ENCODE measurements at regions of chr16 and their contacts with region 1.

Region 1: DNA sequence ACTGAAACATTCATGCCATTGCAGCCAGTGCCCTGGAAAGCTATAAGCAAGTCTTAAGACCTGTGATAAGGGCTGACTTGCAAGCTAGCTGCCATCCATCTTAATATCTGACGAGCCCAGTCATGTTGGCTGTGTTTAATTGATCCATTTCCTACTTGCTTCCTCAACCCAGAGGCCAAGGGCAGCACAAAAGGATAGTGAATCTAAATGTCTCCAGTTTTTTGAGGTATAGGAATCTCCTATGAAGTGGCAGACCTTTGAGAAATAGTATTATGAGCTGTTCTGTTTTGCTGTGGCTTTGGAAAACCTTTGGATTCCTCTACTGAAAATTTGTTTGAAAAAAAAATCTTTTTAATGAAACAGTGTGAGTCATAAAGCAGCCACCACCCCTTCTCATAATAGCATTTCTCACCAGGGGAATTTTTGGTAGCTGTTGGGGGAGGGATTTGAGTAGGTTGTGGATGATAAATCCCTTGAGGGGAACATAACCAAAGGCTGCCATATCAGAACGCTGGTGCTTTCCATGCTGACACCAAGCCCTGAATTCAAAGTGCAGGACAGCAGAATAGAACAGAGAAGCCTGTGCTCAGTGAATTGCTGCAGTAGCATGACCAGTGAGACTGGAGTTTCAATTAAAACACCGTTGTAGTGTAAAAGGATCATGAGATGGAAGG is 12.9 kb downstream of the ZNRF1 start:
- DNase-seq: peak; percentile 89
- H3K4me3 ChIP-seq: peak overlapping the region in 1 of 3 experiments; percentile 34
- H3K27ac ChIP-seq: peak overlapping the region; percentile 92
- H3K4me1 ChIP-seq: peaks cover 32% of the 10 kb centered on the region
- H3K27me3 ChIP-seq: no peaks in the 10 kb centered on the region
- CTCF ChIP-seq: no peak
- POLR2A ChIP-seq: no peak

Region 2: GRCh38 chr16:74984535-74985296 is 27.1 kb before region 1 on chr16 and contains the start of gene WDR59:
- CTCF ChIA-PET with region 1: no interaction called
- POLR2A ChIA-PET with region 1: interaction called, 3 read pairs
- dilution Hi-C with region 1: no loop called
- intact Hi-C with region 1: loop called (anchors 1 kb)
- DNase-seq: peak; percentile 99
- H3K4me3 ChIP-seq: peak within 1 kb of the TSS; percentile 41 to 89 (median 73)
- H3K27ac ChIP-seq: peak within 1 kb of the TSS; percentile 42
- H3K4me1 ChIP-seq: no peaks in the 10 kb centered on the region
- H3K27me3 ChIP-seq: no peaks in the 10 kb centered on the region
- CTCF ChIP-seq: no peak
- POLR2A ChIP-seq: peak; percentile 84
- total RNA-seq, gene WDR59: 60.0 and 62.2 TPM in 2 replicates

Region 3: GRCh38 chr16:75025761-75026160 is 14.0 kb after region 1 on chr16:
- CTCF ChIA-PET with region 1: interaction called, 7 read pairs
- POLR2A ChIA-PET with region 1: no interaction called
- dilution Hi-C with region 1: no loop called
- intact Hi-C with region 1: loop called (anchors 2 kb)
- DNase-seq: no peak
- H3K4me3 ChIP-seq: no peak overlapping the region
- H3K27ac ChIP-seq: peak overlapping the region; percentile 68
- H3K4me1 ChIP-seq: peaks cover 33% of the 10 kb centered on the region
- H3K27me3 ChIP-seq: no peaks in the 10 kb centered on the region
- CTCF ChIP-seq: no peak
- POLR2A ChIP-seq: no peak

Region 4: DNA sequence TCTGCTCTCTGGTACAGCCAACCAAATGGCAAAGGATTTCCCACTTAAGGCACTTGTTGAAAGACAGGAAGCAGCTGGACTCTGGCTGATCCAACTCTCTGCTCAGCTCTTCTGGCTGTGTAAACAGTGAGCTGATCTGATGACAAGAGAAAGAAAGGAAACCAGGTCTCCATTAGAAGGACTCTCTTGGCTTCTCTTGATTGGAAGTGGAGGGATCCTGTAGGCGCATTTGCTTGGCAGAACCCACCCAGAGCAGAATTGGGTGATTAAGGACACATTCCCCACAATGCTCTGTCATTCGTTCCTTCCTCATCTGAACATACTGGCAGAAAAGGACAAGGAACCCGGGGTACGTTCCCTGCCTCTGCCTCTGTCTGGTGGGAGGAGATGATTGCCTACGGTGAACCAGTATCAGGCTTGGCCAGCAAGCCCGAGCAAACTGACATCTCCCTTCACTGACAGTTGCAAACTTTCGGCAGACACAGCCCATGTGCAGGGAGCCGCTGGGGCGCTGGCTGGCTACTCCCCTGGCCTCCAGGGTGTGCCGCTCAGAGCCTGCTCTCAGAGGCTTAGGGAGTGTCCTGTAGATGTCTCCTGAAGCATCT is 75.7 kb after region 1 on chr16:
- CTCF ChIA-PET with region 1: no interaction called
- POLR2A ChIA-PET with region 1: no interaction called
- dilution Hi-C with region 1: no loop called
- intact Hi-C with region 1: loop called (anchors 1 kb)
- DNase-seq: peak; percentile 96
- H3K4me3 ChIP-seq: no peak overlapping the region
- H3K27ac ChIP-seq: peak overlapping the region; percentile 45
- H3K4me1 ChIP-seq: peaks cover 26% of the 10 kb centered on the region
- H3K27me3 ChIP-seq: no peaks in the 10 kb centered on the region
- CTCF ChIP-seq: no peak
- POLR2A ChIP-seq: peak; percentile 71

Region 5: DNA sequence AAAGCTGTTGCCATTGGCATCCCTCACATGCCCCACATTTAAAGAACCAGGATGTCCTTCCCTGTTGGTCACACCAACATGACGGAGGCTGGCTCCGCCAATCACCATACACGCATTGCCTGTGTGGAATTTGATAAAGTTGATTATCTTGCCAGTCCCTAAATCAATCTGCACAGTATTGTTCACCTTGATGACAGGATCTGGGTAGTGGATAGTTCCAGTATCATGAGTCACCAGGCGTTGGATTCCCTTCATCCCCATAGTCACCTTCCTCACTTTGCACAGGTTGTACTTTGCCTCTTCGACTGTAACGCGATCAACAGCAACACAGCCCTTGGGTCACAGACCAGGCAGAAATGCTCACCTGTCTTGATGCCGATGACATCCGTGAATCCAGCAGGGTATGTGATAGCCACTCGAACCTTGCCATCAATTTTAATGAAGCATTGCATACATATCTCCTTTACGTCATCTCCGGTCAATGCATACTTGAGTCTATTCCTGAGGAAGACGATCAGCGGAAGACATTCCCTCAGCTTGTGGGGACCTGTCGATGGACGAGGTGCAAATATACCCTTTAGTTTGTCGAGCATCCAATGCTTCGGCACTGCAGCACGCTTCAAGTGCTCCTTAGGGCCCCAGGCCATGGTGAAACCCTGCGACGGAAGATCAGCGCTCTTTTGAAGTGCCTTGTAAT is 181.0 kb after region 1 on chr16:
- CTCF ChIA-PET with region 1: no interaction called
- POLR2A ChIA-PET with region 1: no interaction called
- dilution Hi-C with region 1: no loop called
- intact Hi-C with region 1: no loop called
- DNase-seq: no peak
- H3K4me3 ChIP-seq: no peak overlapping the region
- H3K27ac ChIP-seq: no peak overlapping the region
- H3K4me1 ChIP-seq: no peaks in the 10 kb centered on the region
- H3K27me3 ChIP-seq: peaks cover 6 to 7% of the 10 kb centered on the region in 2 experiments
- CTCF ChIP-seq: no peak
- POLR2A ChIP-seq: no peak